Left cardiac atrium (tissue), 4 donors: ENCODE measurements at regions of chr1 and their contacts with region 1.

Region 1: GRCh38 chr1:204941421-204942338 is 71.0 kb downstream of the NFASC start:
- DNase-seq: peak; percentile 62
- ATAC-seq: peak; percentile 73 to 76

Region 2: DNA sequence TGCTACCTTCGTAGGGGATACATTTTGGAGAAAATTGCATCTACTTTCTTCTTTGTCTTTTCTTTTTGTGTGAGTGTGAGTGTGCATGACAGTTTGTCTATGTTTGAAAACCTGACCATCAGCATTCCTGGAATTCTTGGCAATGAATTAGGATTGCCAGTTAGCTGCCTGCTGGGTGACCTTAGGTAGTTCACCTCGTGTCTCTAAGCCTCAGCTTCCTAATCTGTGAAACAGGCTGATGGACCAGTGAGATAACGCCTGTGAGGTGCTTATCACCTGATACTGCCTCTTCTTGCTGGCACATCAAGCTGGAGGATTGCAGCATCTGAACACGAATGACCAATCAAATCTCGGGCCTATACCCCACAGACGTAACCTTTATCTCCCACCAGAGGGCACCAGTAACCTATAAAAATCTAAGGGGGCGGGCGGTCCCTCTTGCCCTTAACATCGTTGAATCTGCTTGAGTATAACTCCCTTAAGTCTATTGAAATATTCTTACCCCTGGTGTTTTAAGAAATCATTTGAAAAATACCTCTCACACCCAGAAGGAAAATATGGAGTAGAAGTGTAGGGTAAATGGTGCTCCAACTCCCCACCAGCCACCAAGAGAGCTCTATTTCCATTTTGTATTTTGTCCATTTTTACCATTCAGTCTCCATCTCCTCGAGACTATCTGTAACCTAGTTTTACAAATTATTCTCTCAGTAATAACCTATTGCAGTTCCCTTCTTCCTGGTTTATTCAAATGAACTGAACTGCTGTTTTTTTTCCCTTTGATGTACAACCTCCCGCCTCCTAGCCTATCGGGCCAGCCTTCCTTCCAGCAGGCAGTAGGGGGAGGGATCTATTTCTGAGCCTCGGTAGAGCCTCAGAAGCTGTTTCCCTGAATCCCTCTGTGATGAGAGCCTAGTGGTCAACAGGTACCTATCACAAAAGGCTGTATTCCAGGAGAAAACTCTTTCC is 375.8 kb before region 1 on chr1:
- intact Hi-C with region 1: loop called (anchors 5 to 10 kb)
- DNase-seq: peak; percentile 55
- ATAC-seq: peak; percentile 85 to 88

Region 3: GRCh38 chr1:204806943-204807687 is 134.6 kb before region 1 on chr1:
- intact Hi-C with region 1: loop called (anchors 1 to 5 kb)
- DNase-seq: peak; percentile 86
- ATAC-seq: peak; percentile 95 to 96

Region 4: GRCh38 chr1:204828338-204828850 is 113.3 kb before region 1 on chr1:
- intact Hi-C with region 1: loop called in 1 of 2 experiments (anchors 5 kb)
- DNase-seq: peak; percentile 80
- ATAC-seq: peak; percentile 95 to 96

Region 5: DNA sequence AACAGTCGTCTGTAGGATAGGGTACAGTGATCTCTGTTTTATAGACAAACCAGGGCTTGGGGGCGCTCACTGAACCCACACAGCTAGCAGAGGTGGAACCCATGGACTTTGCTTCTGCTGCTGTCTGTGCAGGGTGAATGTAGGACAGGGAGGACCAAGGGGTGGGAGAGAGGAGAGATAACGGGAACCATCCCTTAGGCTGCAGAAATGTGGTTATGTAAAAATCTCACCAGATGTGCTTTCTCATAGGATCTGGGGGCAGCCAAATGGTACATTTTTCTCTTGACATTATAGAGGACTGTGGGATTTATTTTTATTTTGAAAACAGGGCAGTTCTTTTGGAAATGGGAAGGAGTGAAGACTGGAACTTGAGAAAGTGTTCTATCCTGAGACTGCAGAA is 62.3 kb before region 1 on chr1:
- intact Hi-C with region 1: no loop called
- DNase-seq: no peak
- ATAC-seq: peak; percentile 50 to 56

Region 6: GRCh38 chr1:205568469-205569361 is 627.0 kb after region 1 on chr1:
- intact Hi-C with region 1: no loop called
- DNase-seq: no peak
- ATAC-seq: peak; percentile 61 to 67